ENCODE measurements at regions of chr2 and their contacts with region 1.

Region 1: GRCh38 chr2:32430804-32431203 is 74.0 kb downstream of the BIRC6 start:
- DNase-seq: no peak
- ATAC-seq: no peak
- H3K4me3 ChIP-seq: no peak overlapping the region
- H3K4me3 Mint-ChIP-seq: no peak overlapping the region
- H3K27ac ChIP-seq: no peak overlapping the region
- H3K27ac Mint-ChIP-seq: no peak overlapping the region
- H3K4me1 ChIP-seq: peaks cover under 1 to 1% of the 10 kb centered on the region in 2 donors
- H3K4me1 Mint-ChIP-seq: peaks cover 13 to 37% (median 29%) of the 10 kb centered on the region in 7 donors
- H3K27me3 ChIP-seq: no peaks in the 10 kb centered on the region
- H3K27me3 Mint-ChIP-seq: no peaks in the 10 kb centered on the region

Region 2: DNA sequence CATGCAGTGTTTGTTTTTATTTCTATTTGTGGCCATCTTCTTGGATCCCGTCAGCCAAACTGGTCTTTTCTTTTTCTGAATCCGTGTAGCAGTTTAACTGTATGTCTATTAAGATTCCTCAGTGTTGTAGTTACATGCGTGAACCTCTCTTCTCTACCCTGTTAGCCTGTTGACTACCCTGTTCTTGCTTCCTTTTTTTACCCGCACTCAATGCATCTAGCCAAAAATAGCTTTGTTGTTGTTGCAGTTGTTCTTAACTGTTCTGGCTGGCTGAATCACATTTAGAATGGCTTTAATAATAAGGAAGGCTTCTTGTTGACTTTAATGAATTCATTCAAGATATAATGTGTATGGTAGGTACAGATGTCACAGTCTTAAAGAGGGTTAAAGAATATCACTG is 1846.7 kb before region 1 on chr2:
- CTCF ChIA-PET with region 1: no interaction called
- POLR2A ChIA-PET with region 1: no interaction called
- intact Hi-C with region 1: no loop called
- DNase-seq: no peak
- ATAC-seq: no peak
- H3K4me3 ChIP-seq: no peak overlapping the region
- H3K4me3 Mint-ChIP-seq: no peak overlapping the region
- H3K27ac ChIP-seq: no peak overlapping the region
- H3K27ac Mint-ChIP-seq: no peak overlapping the region
- H3K4me1 ChIP-seq: peaks cover 0 to 3% of the 10 kb centered on the region in 2 donors
- H3K4me1 Mint-ChIP-seq: peaks cover 0 to 37% (median 11%) of the 10 kb centered on the region in 7 donors
- H3K27me3 ChIP-seq: no peaks in the 10 kb centered on the region
- H3K27me3 Mint-ChIP-seq: no peaks in the 10 kb centered on the region

Region 3: GRCh38 chr2:32310577-32310976 is 120.2 kb before region 1 on chr2:
- CTCF ChIA-PET with region 1: no interaction called
- POLR2A ChIA-PET with region 1: no interaction called
- intact Hi-C with region 1: no loop called
- DNase-seq: no peak
- ATAC-seq: no peak
- H3K4me3 ChIP-seq: no peak overlapping the region
- H3K4me3 Mint-ChIP-seq: no peak overlapping the region
- H3K27ac ChIP-seq: no peak overlapping the region
- H3K27ac Mint-ChIP-seq: no peak overlapping the region
- H3K4me1 ChIP-seq: no peaks in the 10 kb centered on the region
- H3K4me1 Mint-ChIP-seq: no peaks in the 10 kb centered on the region
- H3K27me3 ChIP-seq: no peaks in the 10 kb centered on the region
- H3K27me3 Mint-ChIP-seq: no peaks in the 10 kb centered on the region

Region 4: GRCh38 chr2:32384529-32384928 is 46.3 kb before region 1 on chr2:
- CTCF ChIA-PET with region 1: no interaction called
- POLR2A ChIA-PET with region 1: no interaction called
- intact Hi-C with region 1: no loop called
- DNase-seq: no peak
- ATAC-seq: peak; percentile 44
- H3K4me3 ChIP-seq: no peak overlapping the region
- H3K4me3 Mint-ChIP-seq: no peak overlapping the region
- H3K27ac ChIP-seq: no peak overlapping the region
- H3K27ac Mint-ChIP-seq: peak overlapping the region in 1 of 9 donors; percentile 15
- H3K4me1 ChIP-seq: no peaks in the 10 kb centered on the region
- H3K4me1 Mint-ChIP-seq: peaks cover 8 to 37% (median 24%) of the 10 kb centered on the region in 7 donors
- H3K27me3 ChIP-seq: no peaks in the 10 kb centered on the region
- H3K27me3 Mint-ChIP-seq: no peaks in the 10 kb centered on the region

Region 5: GRCh38 chr2:32417659-32418058 is 13.1 kb before region 1 on chr2:
- CTCF ChIA-PET with region 1: no interaction called
- POLR2A ChIA-PET with region 1: no interaction called
- intact Hi-C with region 1: loop called in 1 of 2 experiments (anchors 2 kb)
- DNase-seq: no peak
- ATAC-seq: no peak
- H3K4me3 ChIP-seq: no peak overlapping the region
- H3K4me3 Mint-ChIP-seq: no peak overlapping the region
- H3K27ac ChIP-seq: no peak overlapping the region
- H3K27ac Mint-ChIP-seq: no peak overlapping the region
- H3K4me1 ChIP-seq: peaks cover 0 to 6% of the 10 kb centered on the region in 2 donors
- H3K4me1 Mint-ChIP-seq: peaks cover 14 to 57% (median 32%) of the 10 kb centered on the region in 7 donors
- H3K27me3 ChIP-seq: no peaks in the 10 kb centered on the region
- H3K27me3 Mint-ChIP-seq: no peaks in the 10 kb centered on the region

Measured in naive thymus-derived CD4-positive, alpha-beta T cell (primary cell).